Activated T-helper 1 cell treated with anti-CD3 and anti-CD28 coated beads, Interleukin-12 subunit alpha, Interleukin-12 subunit beta, Interleukin-2, Interleukin-4 antibody, amounts not matched to agents 30 ng/mL and 10 ng/mL and 1 ng/mL, durations not matched to agents 14 hours and 24 hours and 36 hours (primary cell): ENCODE measurements at regions of chr14 and their contacts with region 1.

Region 1: DNA sequence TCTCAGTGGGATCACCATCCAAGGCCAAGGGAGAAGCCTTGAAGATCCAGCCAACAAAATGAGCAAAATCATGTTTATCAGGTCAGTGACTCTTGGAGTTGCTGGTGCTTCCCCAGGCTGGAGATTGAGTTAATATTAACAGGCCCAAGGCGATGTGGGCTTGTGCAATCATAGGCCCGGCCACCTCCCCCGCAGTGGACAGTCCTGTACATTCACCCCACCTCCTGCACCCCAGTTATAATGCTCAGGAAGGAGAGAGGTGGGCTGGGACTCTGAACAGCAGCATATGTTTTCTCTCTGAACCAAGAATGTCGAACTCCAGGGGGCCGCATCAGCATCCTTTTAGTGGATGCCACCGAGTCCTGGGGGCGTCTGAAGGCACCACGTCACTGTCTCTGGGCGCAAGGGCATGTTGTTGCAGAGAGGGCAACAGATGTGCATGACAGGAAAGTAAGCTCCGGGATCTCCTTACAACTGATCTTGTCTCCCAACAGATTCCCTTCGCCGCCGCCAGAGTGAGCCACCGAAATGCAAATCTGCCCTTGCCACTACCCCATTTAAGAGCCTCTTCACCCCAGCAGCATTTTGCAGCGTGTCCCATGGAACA is 32.2 kb upstream of the SERPINA6 start:
- DNase-seq: no peak
- H3K4me3 Mint-ChIP-seq: no peak overlapping the region
- H3K27ac Mint-ChIP-seq: no peak overlapping the region
- H3K4me1 Mint-ChIP-seq: no peaks in the 10 kb centered on the region
- H3K27me3 Mint-ChIP-seq: peaks cover 25% of the 10 kb centered on the region

Region 2: DNA sequence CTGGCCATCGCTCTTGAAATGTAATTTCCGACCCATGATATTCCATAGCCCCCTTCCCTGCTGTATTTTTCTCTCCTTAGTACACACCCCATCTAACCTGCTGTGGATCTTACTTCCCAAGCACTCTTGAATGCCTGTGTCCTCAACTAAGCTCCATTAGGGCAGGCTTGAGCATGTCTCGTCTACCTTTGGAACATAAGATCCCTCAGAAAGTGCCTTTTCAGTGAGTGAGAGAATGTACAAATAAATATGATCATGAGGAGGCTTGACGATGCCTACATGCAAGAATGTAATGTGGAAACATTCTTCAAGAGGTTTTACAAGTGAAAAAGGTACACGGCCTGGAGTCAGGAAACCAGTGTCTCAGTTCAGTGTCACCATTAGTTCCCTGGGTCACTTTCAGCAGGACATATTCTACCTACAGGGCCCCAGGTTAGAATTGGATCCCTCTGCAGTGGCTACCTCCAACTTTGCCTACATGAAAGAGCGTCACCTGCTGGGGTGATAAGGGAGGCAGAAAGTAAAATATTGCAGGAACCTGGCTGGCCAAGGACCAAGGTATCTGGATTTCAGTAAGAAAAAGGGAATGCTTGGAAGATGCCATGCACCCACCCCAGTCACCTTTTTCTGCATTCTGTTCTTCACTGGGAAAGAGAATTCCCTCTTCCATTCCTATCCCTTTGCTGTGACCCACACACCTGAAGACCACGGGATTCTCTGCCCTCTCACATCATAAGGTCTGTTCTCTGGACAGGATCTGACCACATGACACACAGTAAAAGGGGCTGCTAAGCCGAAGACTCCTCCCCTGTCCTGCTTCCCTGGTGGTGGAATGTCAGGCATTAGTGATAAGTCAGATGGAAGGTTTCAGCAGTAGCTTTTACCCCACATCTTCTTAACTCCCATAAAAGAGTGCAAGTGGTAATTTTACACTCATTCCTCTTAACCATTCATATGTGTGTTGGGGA is 57.7 kb after region 1 on chr14:
- intact Hi-C with region 1: loop called (anchors 1 kb)
- DNase-seq: no peak
- H3K4me3 Mint-ChIP-seq: no peak overlapping the region
- H3K27ac Mint-ChIP-seq: no peak overlapping the region
- H3K4me1 Mint-ChIP-seq: no peaks in the 10 kb centered on the region
- H3K27me3 Mint-ChIP-seq: peaks cover 12% of the 10 kb centered on the region